Heart left ventricle (tissue), 16 donors: ENCODE measurements at regions of chr1 and their contacts with region 1.

Region 1: DNA sequence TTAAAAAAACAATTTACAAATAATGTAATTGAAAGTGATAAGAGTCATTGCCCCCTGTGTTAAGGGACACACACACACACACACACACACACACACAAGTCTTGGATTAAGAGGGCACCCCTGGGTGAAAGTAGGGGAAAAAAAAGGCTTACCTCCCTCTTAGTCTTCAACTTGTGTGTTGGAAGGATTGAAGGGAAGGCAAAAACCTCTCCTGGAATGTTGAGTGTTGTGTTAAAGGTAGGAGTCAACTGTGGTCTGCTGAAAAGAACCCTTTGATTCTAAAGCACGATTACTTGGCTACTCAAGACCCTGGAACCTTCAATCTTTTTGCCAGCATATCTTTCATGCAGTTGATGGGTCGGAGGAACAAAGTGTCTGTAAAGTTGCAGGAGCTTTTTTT is 6.4 kb downstream of the PBX1 start:
- DNase-seq: no peak
- ATAC-seq: no peak
- H3K4me3 ChIP-seq: peak overlapping the region in 8 of 12 donors; percentile 65 to 83 (median 74)
- H3K27ac ChIP-seq: peak overlapping the region in 8 of 12 donors; percentile 3 to 87 (median 72)
- H3K4me1 ChIP-seq: peaks cover 0 to 55% (median 20%) of the 10 kb centered on the region in 12 donors
- H3K27me3 ChIP-seq: no peaks in the 10 kb centered on the region
- CTCF ChIP-seq: no peak
- POLR2A ChIP-seq: no peak

Region 2: DNA sequence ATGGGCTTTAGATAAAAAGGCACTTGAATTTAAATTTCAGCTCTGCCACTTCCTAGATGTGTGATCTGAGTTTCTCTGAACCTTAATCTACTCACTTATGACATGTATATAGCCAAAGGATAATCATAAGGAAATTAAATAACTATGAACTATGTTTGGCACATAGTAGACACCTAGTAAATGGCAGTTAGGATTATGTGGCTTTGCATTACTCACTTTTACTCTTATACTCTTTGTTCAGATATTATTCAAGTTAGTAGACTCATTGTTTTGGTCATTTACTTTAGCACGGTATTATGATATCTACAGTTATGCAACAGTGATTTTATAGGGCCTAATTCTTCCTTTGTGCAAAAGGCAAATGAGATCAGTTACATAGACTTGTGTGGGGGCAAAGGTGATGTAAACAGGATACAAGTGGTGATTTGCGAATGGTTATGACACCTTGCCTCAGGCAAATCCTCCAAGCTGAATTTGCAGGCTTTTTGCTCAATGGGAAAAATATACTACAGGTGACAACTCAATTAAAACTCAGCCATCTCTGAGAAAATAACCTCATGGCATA is 303.6 kb before region 1 on chr1:
- intact Hi-C with region 1: no loop called
- DNase-seq: no peak
- ATAC-seq: no peak
- H3K4me3 ChIP-seq: no peak overlapping the region
- H3K27ac ChIP-seq: no peak overlapping the region
- H3K4me1 ChIP-seq: no peaks in the 10 kb centered on the region
- H3K27me3 ChIP-seq: no peaks in the 10 kb centered on the region
- CTCF ChIP-seq: no peak
- POLR2A ChIP-seq: no peak

Region 3: DNA sequence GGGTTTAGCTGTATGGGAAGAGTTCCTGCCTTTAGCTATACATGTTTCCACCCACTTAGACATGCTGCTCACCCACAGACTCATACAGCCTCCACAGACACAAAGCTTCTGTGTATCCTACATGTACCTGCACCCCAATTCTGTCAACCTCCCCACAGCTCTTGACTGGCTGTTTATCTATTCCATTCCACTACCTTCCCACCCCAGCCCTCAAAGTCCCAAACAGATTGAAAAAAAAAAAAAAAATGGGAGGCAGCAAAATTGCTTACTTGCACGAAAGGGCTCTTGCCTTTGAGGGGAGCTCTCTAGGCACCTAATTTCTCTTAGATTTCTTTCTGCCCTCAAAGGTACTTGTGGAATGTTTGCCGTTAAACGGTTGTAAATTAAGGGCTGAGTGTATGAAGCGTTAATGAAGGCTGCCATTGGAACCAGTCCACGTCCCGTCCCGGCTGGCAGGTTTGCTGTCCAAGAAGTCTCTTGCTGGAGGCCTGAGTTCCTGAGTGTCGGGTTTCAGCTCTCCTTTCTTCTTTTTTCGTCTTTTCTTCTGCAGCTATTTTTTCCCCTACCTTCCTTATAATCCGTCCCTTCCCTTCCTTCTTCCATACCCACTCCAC is 37.2 kb after region 1 on chr1:
- intact Hi-C with region 1: loop called in 5 of 10 experiments (anchors 5 kb)
- DNase-seq: peak; percentile 45 to 69 (median 64)
- ATAC-seq: peak; percentile 59 to 78 (median 74)
- H3K4me3 ChIP-seq: peak overlapping the region in 3 of 12 donors; percentile 5 to 7 (median 7)
- H3K27ac ChIP-seq: peak overlapping the region in 11 of 12 donors; percentile 6 to 65 (median 16)
- H3K4me1 ChIP-seq: peaks cover 0 to 57% (median 24%) of the 10 kb centered on the region in 12 donors
- H3K27me3 ChIP-seq: no peaks in the 10 kb centered on the region
- CTCF ChIP-seq: peak in 1 of 12 donors; percentile 16
- POLR2A ChIP-seq: no peak